H1 (cell line): ENCODE measurements at regions of chr14 and their contacts with region 1.

Region 1: DNA sequence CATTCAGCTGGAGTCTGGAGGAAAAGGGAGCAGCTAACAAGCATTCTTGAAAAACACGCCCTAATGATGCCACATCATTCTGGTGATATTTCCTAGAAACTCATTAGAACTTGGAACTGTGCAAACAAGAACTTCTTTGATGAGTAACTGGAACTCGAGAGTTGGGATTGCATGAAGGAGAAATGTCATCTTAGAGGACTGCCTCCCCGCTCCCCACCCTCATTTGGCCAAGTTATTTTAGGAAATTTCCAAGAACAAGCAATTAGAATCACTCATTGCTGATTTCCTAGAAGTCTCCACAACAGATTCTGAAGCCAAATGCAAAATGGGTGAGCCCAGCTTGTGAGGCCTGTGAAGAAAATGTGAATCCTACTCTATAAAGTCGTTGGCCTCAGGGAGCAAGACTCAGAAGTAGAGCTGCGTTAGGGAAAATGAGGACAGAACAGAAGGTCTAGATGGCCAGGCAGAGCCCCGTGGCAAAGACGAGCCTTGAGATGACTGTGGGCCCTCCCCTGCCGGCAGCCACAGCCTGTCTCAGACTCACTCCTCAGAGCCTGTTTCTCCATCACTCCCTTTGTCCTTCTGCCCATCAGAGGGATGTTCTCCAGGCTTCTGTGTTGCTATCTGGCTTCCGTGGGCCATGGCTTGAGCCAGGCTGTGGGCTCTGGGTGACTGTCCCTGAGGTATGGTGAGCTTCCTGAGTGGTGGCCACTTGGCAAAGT is 38.4 kb downstream of the RTL1 start:
- DNase-seq: no peak
- H3K4me3 ChIP-seq: no peak overlapping the region
- H3K27ac ChIP-seq: no peak overlapping the region
- H3K4me1 ChIP-seq: no peaks in the 10 kb centered on the region; a peak in 2 of 7 replicates
- H3K27me3 ChIP-seq: no peaks in the 10 kb centered on the region
- CTCF ChIP-seq: no peak
- EP300 ChIP-seq: no peak
- POLR2A ChIP-seq: no peak
- RAD21 ChIP-seq: no peak

Region 2: DNA sequence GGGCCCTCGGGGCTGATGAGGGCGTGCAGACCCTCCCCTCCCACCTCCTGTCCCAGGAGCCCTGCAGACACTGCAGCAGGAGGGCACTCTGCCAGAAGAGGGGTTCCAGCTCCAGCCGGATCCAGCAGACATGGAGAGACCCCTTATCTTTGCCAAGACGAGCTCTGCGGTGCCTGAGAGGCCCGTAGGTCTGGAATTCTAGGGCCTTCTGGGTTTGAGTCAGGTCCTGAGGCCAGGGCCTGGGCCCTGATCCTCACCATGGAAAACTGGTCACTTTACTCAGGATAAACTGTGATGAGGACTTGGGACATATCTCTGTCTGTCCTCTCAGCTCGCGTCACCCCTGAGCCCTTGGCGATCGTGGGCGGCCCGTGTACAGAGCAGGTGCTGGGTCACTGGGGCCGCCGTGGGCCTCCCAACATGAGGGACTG is 25.4 kb before region 1 on chr14:
- CTCF ChIA-PET with region 1: no interaction called
- POLR2A ChIA-PET with region 1: no interaction called
- DNase-seq: no peak
- H3K4me3 ChIP-seq: no peak overlapping the region
- H3K27ac ChIP-seq: peak overlapping the region; percentile 40; the same call in 1 of the 2 replicates
- H3K4me1 ChIP-seq: peaks cover 0 to 33% (median 21%) of the 10 kb centered on the region in 4 experiments; a peak in 6 of 7 replicates
- H3K27me3 ChIP-seq: no peaks in the 10 kb centered on the region; a peak in 2 of 7 replicates
- CTCF ChIP-seq: no peak
- EP300 ChIP-seq: no peak
- POLR2A ChIP-seq: no peak
- RAD21 ChIP-seq: no peak

Region 3: DNA sequence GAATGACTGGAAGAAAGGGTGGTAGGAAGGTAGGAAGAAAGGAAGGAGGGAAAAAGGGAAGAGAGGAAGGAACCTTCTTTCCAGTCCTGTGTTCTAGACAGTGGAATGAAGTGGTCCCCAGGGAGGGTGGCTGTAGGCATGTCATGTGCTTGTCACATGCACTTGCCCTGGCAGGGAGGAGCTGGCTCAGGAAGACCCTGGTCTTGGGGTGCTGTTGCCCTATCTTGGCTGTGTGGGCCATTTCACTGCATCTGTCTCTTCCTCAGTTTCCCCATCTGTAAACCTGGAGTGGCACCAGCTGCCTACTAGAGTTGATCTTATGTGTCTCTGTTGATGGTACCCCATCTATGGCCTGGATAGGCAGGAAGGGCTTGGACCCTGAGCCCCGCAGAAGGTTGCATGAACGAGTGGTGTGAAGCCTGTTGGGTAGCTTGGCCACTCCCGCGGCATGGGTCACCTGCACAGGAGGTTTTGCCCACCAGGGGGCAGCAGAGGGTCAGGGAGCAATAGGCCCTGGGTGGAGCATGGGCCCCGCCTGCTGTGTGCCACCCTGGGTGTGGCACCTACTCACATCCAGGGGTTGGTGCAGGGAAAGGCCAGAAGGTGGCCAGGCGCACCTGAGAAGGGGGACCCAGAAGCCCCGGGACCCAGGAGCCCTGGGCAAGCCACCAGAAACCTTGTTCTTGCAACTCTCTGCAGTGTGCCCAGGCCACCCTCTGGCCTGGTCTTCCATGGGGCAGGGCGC is 14.1 kb before region 1 on chr14:
- CTCF ChIA-PET with region 1: interaction called, 13 read pairs
- POLR2A ChIA-PET with region 1: no interaction called
- DNase-seq: peak; percentile 44 to 95
- H3K4me3 ChIP-seq: no peak overlapping the region
- H3K27ac ChIP-seq: no peak overlapping the region
- H3K4me1 ChIP-seq: no peaks in the 10 kb centered on the region
- H3K27me3 ChIP-seq: no peaks in the 10 kb centered on the region
- CTCF ChIP-seq: peak; percentile 89 to 92 (median 90)
- EP300 ChIP-seq: no peak
- POLR2A ChIP-seq: no peak
- RAD21 ChIP-seq: peak; percentile 79 to 82